Calu3 (cell line): ENCODE measurements at regions of chr1 and their contacts with region 1.

Region 1: GRCh38 chr1:111139956-111140679 is at the starts of genes CEPT1 and DRAM2:
- DNase-seq: peak; percentile 89
- H3K4me3 Mint-ChIP-seq: peak within 1 kb of the TSS; percentile 98
- H3K27ac Mint-ChIP-seq: peak within 1 kb of the TSS; percentile 89
- H3K4me1 Mint-ChIP-seq: peaks cover 22% of the 10 kb centered on the region
- H3K27me3 Mint-ChIP-seq: no peaks in the 10 kb centered on the region
- CTCF ChIP-seq: no peak
- total RNA-seq, gene CEPT1: 24.7 and 26.8 TPM in 2 replicates
- total RNA-seq, gene DRAM2: 23.2 and 25.4 TPM in 2 replicates

Region 2: GRCh38 chr1:111203681-111204200 is 63.6 kb after region 1 on chr1:
- CTCF ChIA-PET with region 1: no interaction called
- intact Hi-C with region 1: loop called (anchors 2 kb)
- DNase-seq: peak; percentile 68
- H3K4me3 Mint-ChIP-seq: peak overlapping the region; percentile 56
- H3K27ac Mint-ChIP-seq: peak overlapping the region; percentile 68
- H3K4me1 Mint-ChIP-seq: peaks cover 46% of the 10 kb centered on the region
- H3K27me3 Mint-ChIP-seq: no peaks in the 10 kb centered on the region
- CTCF ChIP-seq: no peak